Esophagus squamous epithelium (tissue), 5 donors: ENCODE measurements at regions of chr7 and their contacts with region 1.

Region 1: DNA sequence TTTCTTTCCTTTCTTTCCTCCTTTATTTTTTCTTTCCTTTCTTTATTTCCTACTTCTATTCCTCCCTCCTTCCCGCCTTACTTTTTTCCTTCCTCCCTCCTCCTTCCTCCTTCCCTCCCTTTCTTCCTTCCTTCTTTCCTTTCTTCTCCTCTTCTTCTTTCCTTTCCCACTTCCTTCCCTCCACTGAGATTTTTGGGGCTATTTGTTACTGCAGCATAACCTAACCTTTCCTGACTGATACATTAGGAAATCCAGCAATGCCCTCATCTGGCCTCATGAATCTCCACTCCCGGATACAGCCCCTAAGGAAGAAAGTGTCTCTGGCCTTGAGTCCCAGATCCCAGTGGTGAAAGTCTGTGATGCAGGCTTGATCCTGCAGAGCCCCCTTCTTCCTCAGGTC is 38.6 kb upstream of the BAIAP2L1 start:
- DNase-seq: no peak
- H3K4me3 ChIP-seq: no peak overlapping the region
- H3K27ac ChIP-seq: no peak overlapping the region
- H3K4me1 ChIP-seq: no peaks in the 10 kb centered on the region
- H3K27me3 ChIP-seq: peaks cover 0 to 9% (median 0%) of the 10 kb centered on the region in 4 donors
- CTCF ChIP-seq: no peak
- POLR2A ChIP-seq: no peak

Region 2: GRCh38 chr7:98559958-98560357 is 120.5 kb after region 1 on chr7:
- intact Hi-C with region 1: no loop called
- DNase-seq: no peak
- H3K4me3 ChIP-seq: no peak overlapping the region
- H3K27ac ChIP-seq: no peak overlapping the region
- H3K4me1 ChIP-seq: no peaks in the 10 kb centered on the region
- H3K27me3 ChIP-seq: peaks cover 0 to 8% (median 0%) of the 10 kb centered on the region in 4 donors
- CTCF ChIP-seq: no peak
- POLR2A ChIP-seq: no peak

Region 3: GRCh38 chr7:98841179-98841997 is 401.9 kb after region 1 on chr7:
- intact Hi-C with region 1: loop called (anchors 5 kb)
- DNase-seq: no peak
- H3K4me3 ChIP-seq: no peak overlapping the region
- H3K27ac ChIP-seq: no peak overlapping the region
- H3K4me1 ChIP-seq: no peaks in the 10 kb centered on the region
- H3K27me3 ChIP-seq: peaks cover 0 to 44% (median 0%) of the 10 kb centered on the region in 4 donors
- CTCF ChIP-seq: peak; percentile 91 to 98 (median 94)
- POLR2A ChIP-seq: no peak